Right ventricle myocardium inferior (tissue), 1 donor: ENCODE measurements at regions of chr3 and their contacts with region 1.

Region 1: GRCh38 chr3:155870133-155870944 is at the start of gene GMPS:
- DNase-seq: peak; percentile 98
- ATAC-seq: peak; percentile 98
- total RNA-seq, gene GMPS: 28.1 TPM

Region 2: GRCh38 chr3:155382396-155383042 is 487.8 kb before region 1 on chr3:
- intact Hi-C with region 1: loop called (anchors 10 kb)
- DNase-seq: peak; percentile 85
- ATAC-seq: peak; percentile 78

Region 3: DNA sequence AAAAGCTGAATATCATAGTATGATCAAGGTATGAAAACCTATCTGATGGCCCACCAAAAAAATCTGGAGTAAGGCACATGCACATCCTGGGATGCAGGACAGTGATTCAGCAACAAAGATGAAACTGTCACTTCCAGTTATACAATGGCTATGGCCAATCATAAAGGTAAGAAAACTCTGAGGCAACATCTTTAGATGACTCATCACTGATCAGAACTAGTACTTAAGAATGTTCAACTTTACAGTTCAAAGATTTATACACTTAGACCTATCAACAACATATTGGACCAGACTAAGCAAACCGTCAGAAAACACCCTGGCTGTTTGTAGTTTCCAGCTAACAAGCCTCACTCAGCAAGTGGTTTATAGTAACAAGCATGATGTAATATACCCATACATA is 104.1 kb before region 1 on chr3:
- intact Hi-C with region 1: loop called (anchors 10 kb)
- DNase-seq: no peak
- ATAC-seq: no peak

Region 4: GRCh38 chr3:155805802-155806618 is 64.3 kb before region 1 on chr3 and contains the start of gene C3orf33:
- intact Hi-C with region 1: loop called (anchors 5 kb)
- DNase-seq: peak; percentile 88
- ATAC-seq: peak; percentile 97
- total RNA-seq, gene C3orf33: 6.6 TPM

Region 5: GRCh38 chr3:155854141-155854940 is 16.0 kb before region 1 on chr3 and contains the start of gene SLC33A1:
- intact Hi-C with region 1: loop called (anchors 1 kb)
- DNase-seq: peak; percentile 99
- ATAC-seq: peak; percentile 99
- total RNA-seq, gene SLC33A1: 20.4 TPM